ENCODE measurements at regions of chr1 and their contacts with region 1.

Region 1: GRCh38 chr1:6199298-6200187 is at the start of gene RPL22:
- DNase-seq: peak; percentile 98
- ATAC-seq: peak; percentile 94
- H3K4me3 ChIP-seq: peak within 1 kb of the TSS; percentile 82 to 96
- H3K27ac ChIP-seq: peak within 1 kb of the TSS; percentile 94
- H3K4me1 ChIP-seq: peaks cover 22 to 41% of the 10 kb centered on the region in 2 experiments
- H3K27me3 ChIP-seq: no peaks in the 10 kb centered on the region
- CTCF ChIP-seq: no peak
- POLR2A ChIP-seq: peak; percentile 67
- RAD21 ChIP-seq: no peak
- total RNA-seq, gene RPL22: 456 TPM

Region 2: DNA sequence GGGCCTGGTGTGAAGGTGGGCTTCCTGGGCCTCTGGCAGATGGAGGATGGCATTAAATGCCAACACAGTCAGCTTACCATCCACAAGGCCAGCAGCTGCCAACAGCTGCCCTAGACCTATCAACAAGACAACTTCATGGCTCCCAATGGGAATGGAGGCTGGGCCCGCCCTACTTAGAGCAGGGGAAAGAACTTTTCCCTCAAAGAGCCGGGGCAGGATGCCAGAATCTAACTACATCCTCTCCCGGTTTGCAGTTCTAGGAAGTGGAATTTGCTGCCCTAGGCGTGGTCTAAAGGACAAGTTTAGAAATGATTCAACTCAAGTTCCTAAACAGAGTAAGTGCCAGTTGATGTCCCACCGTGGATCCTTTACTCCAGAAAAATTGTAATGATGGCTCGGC is 23.1 kb after region 1 on chr1:
- CTCF ChIA-PET with region 1: interaction called, 44 read pairs
- POLR2A ChIA-PET with region 1: interaction called, 11 read pairs
- RAD21 ChIA-PET with region 1: no interaction called
- intact Hi-C with region 1: no loop called
- DNase-seq: no peak
- ATAC-seq: no peak
- H3K4me3 ChIP-seq: no peak overlapping the region
- H3K27ac ChIP-seq: peak overlapping the region; percentile 55
- H3K4me1 ChIP-seq: peaks cover 80 to 93% of the 10 kb centered on the region in 2 experiments
- H3K27me3 ChIP-seq: no peaks in the 10 kb centered on the region
- CTCF ChIP-seq: no peak
- POLR2A ChIP-seq: no peak
- RAD21 ChIP-seq: no peak

Region 3: DNA sequence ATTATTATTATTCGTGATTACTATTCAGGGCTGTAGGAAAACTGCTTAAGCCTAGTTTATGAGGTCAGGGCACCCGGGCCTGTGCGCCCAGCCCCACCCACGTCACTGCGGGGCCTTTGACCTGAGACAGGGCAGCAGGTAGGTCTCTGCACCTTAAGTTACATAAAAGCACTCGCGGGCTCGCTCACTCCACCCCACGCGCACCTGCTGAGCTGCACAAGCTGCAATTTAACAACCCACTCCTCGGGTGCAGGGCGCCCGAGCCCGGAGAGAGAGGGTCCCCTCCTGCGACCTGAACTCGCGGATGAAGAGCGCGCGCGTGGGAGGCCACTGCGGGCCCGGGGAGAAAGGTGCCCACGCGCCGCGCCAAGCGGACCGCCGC is 35.7 kb after region 1 on chr1:
- CTCF ChIA-PET with region 1: interaction called, 22 read pairs
- POLR2A ChIA-PET with region 1: interaction called, 7 read pairs
- RAD21 ChIA-PET with region 1: no interaction called
- intact Hi-C with region 1: no loop called
- DNase-seq: no peak
- ATAC-seq: peak; percentile 28
- H3K4me3 ChIP-seq: peak overlapping the region; percentile 86 to 87
- H3K27ac ChIP-seq: peak overlapping the region; percentile 67
- H3K4me1 ChIP-seq: peaks cover 13 to 41% of the 10 kb centered on the region in 2 experiments
- H3K27me3 ChIP-seq: no peaks in the 10 kb centered on the region
- CTCF ChIP-seq: no peak
- POLR2A ChIP-seq: no peak
- RAD21 ChIP-seq: no peak

Measured in HCT116 (cell line).